WTC11 (cell line): ENCODE measurements at regions of chr6 and their contacts with region 1.

Region 1: DNA sequence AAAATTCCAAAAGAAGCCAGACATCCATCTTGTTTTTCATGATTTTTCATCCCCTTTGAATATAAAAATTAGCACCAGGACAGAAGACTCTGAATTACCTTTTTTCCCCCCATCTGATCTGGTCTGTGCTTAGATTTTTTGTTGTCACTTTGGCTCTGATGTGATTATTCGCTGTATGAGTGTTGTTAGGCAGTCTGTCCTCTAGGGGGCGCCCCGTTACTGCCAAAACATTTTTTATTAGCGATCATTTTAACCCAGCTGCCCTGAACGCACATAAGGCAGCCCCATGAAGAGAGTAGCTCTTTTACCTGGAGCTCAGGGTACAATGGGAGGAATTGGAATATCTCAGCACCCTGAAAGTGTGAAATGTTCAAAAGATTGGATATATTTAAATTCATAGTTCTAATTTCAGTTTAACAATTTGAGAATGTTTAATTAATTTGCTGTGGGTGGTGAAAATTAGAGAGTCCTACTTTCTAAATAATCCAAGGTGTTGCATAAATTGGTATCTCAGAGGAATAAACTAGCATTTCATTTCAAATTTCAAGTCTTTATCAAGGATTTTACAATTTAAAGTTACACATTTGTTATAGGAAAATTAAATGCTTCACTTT is 60.8 kb downstream of the PRPH2 start:
- DNase-seq: peak; percentile 78
- ATAC-seq: peak; percentile 85
- H3K4me3 Mint-ChIP-seq: no peak overlapping the region
- H3K27ac Mint-ChIP-seq: no peak overlapping the region
- H3K4me1 Mint-ChIP-seq: no peaks in the 10 kb centered on the region
- H3K27me3 Mint-ChIP-seq: no peaks in the 10 kb centered on the region
- CTCF ChIP-seq: peak; percentile 83

Region 2: DNA sequence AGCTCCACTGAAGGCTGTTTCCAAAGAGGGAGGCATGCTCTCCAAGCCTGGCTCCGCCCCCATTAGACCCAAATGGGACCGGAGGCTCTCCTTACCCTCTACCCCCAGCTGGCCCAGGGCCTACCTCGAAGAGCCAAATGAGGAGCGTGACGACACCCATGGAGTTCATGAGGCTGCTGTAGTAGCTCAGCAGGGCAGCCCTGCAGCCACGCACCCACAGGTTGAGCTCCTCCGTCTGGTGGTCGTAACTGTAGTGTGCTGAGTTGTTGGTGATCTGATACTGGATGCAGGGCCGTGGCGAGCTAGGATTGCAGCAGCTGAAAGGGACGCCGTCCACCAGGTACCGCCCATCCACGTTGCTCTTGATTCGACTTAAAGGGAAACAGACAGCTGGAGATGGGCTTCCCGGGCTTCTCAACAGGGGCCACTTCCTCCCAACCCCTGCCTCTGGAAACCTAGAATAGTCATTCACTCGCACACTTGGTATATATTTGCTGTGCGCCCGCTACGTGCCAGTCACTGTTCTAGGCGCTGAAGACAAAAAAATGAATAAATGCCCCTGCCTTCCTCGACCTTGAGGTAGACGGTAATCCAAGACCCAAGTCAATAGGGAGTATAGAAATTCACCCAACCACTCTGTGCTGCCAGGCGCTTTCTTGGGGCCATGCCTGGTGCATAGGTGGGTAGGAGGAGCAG is 42.7 kb after region 1 on chr6:
- CTCF ChIA-PET with region 1: interaction called, 10 read pairs
- POLR2A ChIA-PET with region 1: no interaction called
- DNase-seq: peak; percentile 61
- ATAC-seq: peak; percentile 85
- H3K4me3 Mint-ChIP-seq: peak overlapping the region; percentile 71
- H3K27ac Mint-ChIP-seq: peak overlapping the region; percentile 88
- H3K4me1 Mint-ChIP-seq: peaks cover 14% of the 10 kb centered on the region
- H3K27me3 Mint-ChIP-seq: no peaks in the 10 kb centered on the region
- CTCF ChIP-seq: no peak

Region 3: GRCh38 chr6:42726485-42727086 is 64.9 kb after region 1 on chr6:
- CTCF ChIA-PET with region 1: interaction called, 46 read pairs
- POLR2A ChIA-PET with region 1: interaction called, 4 read pairs
- DNase-seq: peak; percentile 58
- ATAC-seq: peak; percentile 93
- H3K4me3 Mint-ChIP-seq: no peak overlapping the region
- H3K27ac Mint-ChIP-seq: peak overlapping the region; percentile 25; the same call in 1 of the 2 replicates
- H3K4me1 Mint-ChIP-seq: peaks cover 9% of the 10 kb centered on the region
- H3K27me3 Mint-ChIP-seq: no peaks in the 10 kb centered on the region; the same call in 1 of the 2 replicates
- CTCF ChIP-seq: peak; percentile 88

Region 4: DNA sequence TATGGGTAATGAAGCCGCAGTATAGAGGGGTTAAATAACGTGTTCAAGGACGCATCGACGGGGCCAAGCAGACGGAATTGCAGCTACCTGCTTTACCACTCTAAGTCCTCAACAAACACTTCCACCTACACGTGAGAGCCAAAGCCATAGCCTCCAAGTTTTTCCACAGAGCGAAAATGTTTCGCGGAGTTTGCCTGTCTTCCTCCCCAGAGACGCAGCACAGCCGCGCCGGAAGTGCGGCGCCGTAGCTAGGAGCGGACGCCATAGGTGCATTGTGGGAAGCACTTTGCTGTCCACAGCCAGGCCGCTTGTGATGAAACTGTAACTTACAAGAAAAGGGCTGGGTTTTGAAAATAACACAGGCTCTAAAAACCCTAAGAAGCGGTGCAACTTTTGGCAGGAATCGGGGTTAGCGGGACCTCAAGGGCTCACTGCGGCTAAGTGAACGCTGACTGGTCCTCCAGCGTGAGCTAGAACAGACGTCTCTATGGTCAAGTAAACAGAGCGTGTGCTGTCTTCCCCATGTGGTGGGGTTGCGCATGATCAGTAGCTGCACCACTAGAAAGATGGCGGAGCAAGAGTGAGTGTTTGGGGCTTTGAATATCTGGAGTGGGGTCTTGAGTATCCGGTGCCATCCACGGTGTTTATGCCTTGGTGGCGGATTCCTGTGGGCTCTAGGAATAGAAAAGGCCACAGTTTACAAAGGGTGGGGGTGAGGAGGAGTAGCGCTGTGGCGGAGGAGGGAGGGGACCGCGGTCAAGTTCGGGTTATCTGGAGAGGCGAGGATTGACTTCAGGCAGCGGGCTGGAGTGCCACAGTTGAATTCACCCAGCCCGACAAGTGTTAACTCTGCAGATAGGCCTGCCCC is 218.0 kb after region 1 on chr6 and contains the start of gene RPL7L1:
- CTCF ChIA-PET with region 1: interaction called, 23 read pairs
- POLR2A ChIA-PET with region 1: no interaction called
- DNase-seq: peak; percentile 70
- ATAC-seq: peak; percentile 92
- H3K4me3 Mint-ChIP-seq: peak within 1 kb of the TSS; percentile 100
- H3K27ac Mint-ChIP-seq: peak within 1 kb of the TSS; percentile 100
- H3K4me1 Mint-ChIP-seq: peaks cover 8% of the 10 kb centered on the region; the same call in 1 of the 2 replicates
- H3K27me3 Mint-ChIP-seq: no peaks in the 10 kb centered on the region
- CTCF ChIP-seq: no peak
- total RNA-seq, gene RPL7L1: 91.4 to 107 TPM (median 93.0 TPM) in 3 replicates

Region 5: GRCh38 chr6:42901536-42901957 is 239.9 kb after region 1 on chr6:
- CTCF ChIA-PET with region 1: interaction called, 11 read pairs
- POLR2A ChIA-PET with region 1: no interaction called
- DNase-seq: peak; percentile 68
- ATAC-seq: peak; percentile 98
- H3K4me3 Mint-ChIP-seq: no peak overlapping the region
- H3K27ac Mint-ChIP-seq: peak overlapping the region; percentile 84
- H3K4me1 Mint-ChIP-seq: peaks cover 32% of the 10 kb centered on the region
- H3K27me3 Mint-ChIP-seq: no peaks in the 10 kb centered on the region; the same call in 1 of the 2 replicates
- CTCF ChIP-seq: peak; percentile 89

Region 6: DNA sequence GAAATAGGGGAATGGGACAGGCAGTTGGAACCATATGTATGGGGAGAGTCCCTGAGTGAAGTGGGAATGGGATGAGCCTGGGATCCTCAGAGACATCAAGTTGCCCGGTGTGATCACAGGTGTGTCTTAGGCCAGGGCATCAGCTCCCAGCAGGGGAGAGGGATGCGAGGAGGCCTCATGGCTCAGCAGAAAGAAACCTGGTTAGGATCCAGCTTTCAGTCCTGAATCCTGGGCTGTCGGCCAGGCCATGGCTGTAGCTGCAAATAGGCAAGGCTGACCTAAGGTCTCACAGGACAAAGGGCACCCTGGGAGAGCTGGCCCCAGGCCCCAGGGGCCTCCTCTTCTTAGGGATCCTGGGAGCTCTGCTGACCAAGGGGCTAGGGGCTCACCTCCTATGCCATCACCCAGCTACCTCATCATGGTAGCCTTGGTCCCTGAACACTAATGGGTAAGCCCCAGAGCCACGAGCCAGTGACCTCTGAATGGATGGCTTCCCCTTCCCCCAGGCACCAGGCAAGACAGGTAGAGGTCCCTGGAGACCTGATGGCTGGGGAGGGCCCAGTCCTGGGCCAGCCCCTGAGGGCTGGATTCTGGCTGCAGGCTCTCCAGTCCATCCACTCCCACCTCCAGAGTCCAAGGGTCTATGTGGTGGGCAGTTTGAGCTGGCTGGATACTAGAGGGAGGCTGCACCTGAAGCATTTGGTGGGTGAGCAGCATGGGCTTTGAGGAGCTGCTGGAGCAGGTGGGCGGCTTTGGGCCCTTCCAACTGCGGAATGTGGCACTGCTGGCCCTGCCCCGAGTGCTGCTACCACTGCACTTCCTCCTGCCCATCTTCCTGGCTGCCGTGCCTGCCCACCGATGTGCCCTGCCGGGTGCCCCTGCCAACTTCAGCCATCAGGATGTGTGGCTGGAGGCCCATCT is 636.3 kb after region 1 on chr6 and contains the start of gene SLC22A7:
- CTCF ChIA-PET with region 1: no interaction called
- POLR2A ChIA-PET with region 1: no interaction called
- DNase-seq: no peak
- ATAC-seq: no peak
- H3K4me3 Mint-ChIP-seq: no peak within 1 kb of the TSS
- H3K27ac Mint-ChIP-seq: no peak within 1 kb of the TSS
- H3K4me1 Mint-ChIP-seq: peaks cover 11% of the 10 kb centered on the region
- H3K27me3 Mint-ChIP-seq: peaks cover 5% of the 10 kb centered on the region
- CTCF ChIP-seq: no peak
- total RNA-seq, gene SLC22A7: not detected in 3 replicates